PC-9 (cell line): ENCODE measurements at regions of chr11 and their contacts with region 1.

Region 1: GRCh38 chr11:34192481-34193401 is 87.3 kb downstream of the NAT10 start:
- DNase-seq: peak; percentile 83 to 85
- H3K4me3 ChIP-seq: no peak overlapping the region
- H3K27ac ChIP-seq: peak overlapping the region; percentile 25; the same call in 1 of the 2 replicates
- H3K4me1 ChIP-seq: peaks cover 37% of the 10 kb centered on the region
- H3K27me3 ChIP-seq: no peaks in the 10 kb centered on the region
- CTCF ChIP-seq: no peak

Region 2: DNA sequence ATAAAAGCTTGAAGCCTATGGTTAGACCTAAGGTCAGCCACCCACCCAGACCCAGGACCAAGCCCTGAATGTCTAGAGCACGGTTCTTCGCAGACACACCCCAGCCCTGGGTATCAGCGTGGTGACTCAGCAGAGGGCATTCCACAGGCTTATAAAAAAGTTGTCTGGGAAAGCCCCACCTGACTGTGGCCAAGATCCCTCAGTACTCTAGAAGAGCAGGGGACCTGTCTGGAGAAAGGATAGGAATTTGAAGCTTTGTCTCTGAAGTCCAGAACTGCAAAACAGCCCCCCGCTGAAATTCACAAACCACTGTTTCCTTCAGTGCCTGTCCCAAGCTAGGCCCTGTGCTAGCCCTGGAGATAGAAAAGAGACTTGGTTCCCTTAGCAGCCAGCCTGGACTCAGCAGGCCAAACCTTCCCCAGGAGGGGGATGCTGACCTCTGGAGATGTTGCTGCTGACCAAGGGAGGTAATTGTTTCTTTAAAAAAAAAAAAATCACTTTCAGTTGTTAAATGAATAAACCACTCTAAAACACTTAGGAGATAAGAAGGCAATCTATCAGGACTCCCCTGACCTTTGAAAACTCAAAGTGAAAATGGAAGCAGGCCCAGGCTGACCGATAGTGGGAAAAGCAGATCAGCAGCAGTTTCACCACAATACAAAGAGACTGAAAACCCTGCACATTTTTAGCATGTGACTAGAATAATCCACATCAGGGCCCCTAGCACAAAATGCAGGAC is 51.2 kb after region 1 on chr11:
- CTCF ChIA-PET with region 1: no interaction called
- POLR2A ChIA-PET with region 1: no interaction called
- intact Hi-C with region 1: loop called (anchors 1 kb)
- DNase-seq: peak; percentile 90 to 95
- H3K4me3 ChIP-seq: no peak overlapping the region
- H3K27ac ChIP-seq: peak overlapping the region; percentile 76
- H3K4me1 ChIP-seq: peaks cover 64% of the 10 kb centered on the region
- H3K27me3 ChIP-seq: no peaks in the 10 kb centered on the region
- CTCF ChIP-seq: no peak

Region 3: GRCh38 chr11:34274723-34275401 is 82.1 kb after region 1 on chr11:
- CTCF ChIA-PET with region 1: no interaction called
- POLR2A ChIA-PET with region 1: interaction called, 5 read pairs
- intact Hi-C with region 1: loop called (anchors 1 kb)
- DNase-seq: peak; percentile 99 to 100
- H3K4me3 ChIP-seq: peak overlapping the region; percentile 2; the same call in 1 of the 2 replicates
- H3K27ac ChIP-seq: peak overlapping the region; percentile 77
- H3K4me1 ChIP-seq: peaks cover 34% of the 10 kb centered on the region
- H3K27me3 ChIP-seq: no peaks in the 10 kb centered on the region
- CTCF ChIP-seq: no peak

Region 4: GRCh38 chr11:34295531-34295930 is 102.8 kb after region 1 on chr11:
- CTCF ChIA-PET with region 1: no interaction called
- POLR2A ChIA-PET with region 1: interaction called, 27 read pairs
- intact Hi-C with region 1: no loop called
- DNase-seq: no peak
- H3K4me3 ChIP-seq: no peak overlapping the region
- H3K27ac ChIP-seq: no peak overlapping the region
- H3K4me1 ChIP-seq: peaks cover 48% of the 10 kb centered on the region
- H3K27me3 ChIP-seq: no peaks in the 10 kb centered on the region
- CTCF ChIP-seq: no peak

Region 5: GRCh38 chr11:35800970-35801953 is 1608.5 kb after region 1 on chr11:
- CTCF ChIA-PET with region 1: no interaction called
- POLR2A ChIA-PET with region 1: no interaction called
- intact Hi-C with region 1: no loop called
- DNase-seq: no peak
- H3K4me3 ChIP-seq: no peak overlapping the region
- H3K27ac ChIP-seq: no peak overlapping the region
- H3K4me1 ChIP-seq: peaks cover 32% of the 10 kb centered on the region
- H3K27me3 ChIP-seq: no peaks in the 10 kb centered on the region
- CTCF ChIP-seq: no peak